Endothelial cell of umbilical vein (primary cell): ENCODE measurements at regions of chr18 and their contacts with region 1.

Region 1: DNA sequence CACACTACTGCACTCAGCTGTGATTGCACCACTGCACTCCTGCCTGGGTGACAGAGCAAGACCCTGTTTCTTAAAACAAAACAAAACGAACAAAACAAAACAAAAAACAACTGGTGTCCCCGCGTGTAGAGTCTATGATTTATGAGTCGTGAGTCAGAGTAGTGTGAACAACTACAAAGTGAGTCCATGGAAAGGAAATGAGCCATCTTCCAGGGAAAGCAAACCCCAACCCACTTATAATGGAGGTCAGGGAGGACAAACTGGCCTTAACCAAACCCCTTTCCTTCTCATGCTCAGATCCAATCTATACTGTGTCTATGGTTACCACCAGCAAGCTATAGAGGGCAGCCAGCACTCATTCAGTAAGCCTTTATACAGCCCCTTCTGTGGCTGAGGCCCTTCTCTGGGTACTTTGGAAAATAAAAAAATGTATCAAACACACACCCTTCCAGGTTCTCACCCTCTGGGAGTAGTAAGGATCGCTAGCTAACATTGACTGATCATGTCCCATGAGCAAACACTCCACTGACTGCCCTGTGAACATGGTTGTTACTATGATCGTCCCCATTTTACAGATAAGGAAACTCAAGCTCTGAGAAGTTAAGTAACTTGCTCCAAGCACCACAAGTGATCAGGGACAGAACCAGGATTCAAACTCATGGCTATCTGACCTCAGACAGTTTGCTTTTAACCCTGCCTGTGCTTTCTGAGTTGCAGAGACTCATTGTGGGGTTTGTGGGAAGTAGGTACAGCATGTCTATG is 24.7 kb upstream of the COLEC12 start:
- DNase-seq: peak; percentile 98
- H3K4me3 ChIP-seq: no peak overlapping the region
- H3K27ac ChIP-seq: peak overlapping the region; percentile 98
- H3K4me1 ChIP-seq: peaks cover 37% of the 10 kb centered on the region
- H3K27me3 ChIP-seq: no peaks in the 10 kb centered on the region
- CTCF ChIP-seq: no peak
- POLR2A ChIP-seq: peak; percentile 74

Region 2: DNA sequence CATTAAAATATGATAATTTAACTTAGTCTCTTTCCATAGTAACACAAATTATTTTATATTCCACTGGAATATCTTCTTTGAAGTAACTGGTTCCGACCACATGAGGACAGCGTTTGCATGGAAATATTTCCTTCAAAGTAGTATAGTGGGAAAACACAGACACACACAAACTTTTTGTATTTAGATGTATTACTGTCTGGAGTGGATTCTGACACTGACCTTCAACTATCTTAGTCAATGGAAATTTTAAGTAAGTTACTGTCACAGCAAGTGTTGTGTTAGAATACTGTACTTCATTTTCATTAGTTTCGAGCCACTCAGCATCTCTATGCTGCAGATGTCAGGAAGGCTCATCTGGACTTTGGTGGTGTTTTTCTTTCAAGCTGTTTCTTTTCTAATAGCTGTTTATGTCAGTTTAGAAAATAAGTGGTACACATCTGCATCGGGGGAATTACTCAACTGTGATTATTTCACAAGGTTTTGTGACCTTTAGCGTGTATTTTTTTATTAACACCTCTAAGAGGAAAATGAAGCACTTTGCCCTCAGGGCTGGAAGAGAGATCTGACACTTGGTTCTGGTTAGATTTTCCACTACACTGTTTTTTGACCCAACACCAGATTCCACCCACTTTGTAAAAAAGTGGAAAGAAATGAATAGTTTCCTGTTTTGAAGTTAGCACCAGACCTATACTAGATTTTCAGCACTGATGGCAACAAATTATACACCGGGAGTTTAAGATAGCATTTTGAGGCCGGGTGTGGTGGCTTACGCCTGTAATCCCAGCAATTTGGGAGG is 238.5 kb before region 1 on chr18:
- CTCF ChIA-PET with region 1: no interaction called
- POLR2A ChIA-PET with region 1: no interaction called
- dilution Hi-C with region 1: no loop called
- intact Hi-C with region 1: loop called (anchors 2 kb)
- DNase-seq: peak; percentile 67
- H3K4me3 ChIP-seq: no peak overlapping the region
- H3K27ac ChIP-seq: no peak overlapping the region
- H3K4me1 ChIP-seq: no peaks in the 10 kb centered on the region
- H3K27me3 ChIP-seq: peaks cover 0 to 3% of the 10 kb centered on the region in 2 experiments
- CTCF ChIP-seq: peak; percentile 38 to 39
- POLR2A ChIP-seq: no peak

Region 3: DNA sequence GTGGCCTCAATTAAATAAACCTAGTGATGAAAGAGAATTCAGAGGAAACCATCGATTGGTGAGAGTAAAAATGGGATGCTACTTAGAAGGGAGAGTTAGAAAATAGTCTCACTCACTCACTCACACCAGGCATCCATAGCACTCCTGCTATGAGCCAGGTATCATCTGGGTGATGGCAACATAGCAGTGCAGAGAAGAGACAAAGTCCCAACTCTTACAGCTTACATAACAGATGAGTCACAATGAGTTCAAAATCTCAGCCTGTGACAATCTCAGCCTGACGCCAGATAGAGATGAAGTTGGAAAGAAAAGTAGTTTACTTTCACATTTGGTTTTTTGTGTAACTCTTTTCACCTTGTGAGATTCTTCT is 202.0 kb before region 1 on chr18:
- CTCF ChIA-PET with region 1: no interaction called
- POLR2A ChIA-PET with region 1: no interaction called
- dilution Hi-C with region 1: no loop called
- intact Hi-C with region 1: loop called (anchors 2 kb)
- DNase-seq: peak; percentile 62
- H3K4me3 ChIP-seq: no peak overlapping the region
- H3K27ac ChIP-seq: peak overlapping the region; percentile 29
- H3K4me1 ChIP-seq: peaks cover 30% of the 10 kb centered on the region
- H3K27me3 ChIP-seq: no peaks in the 10 kb centered on the region
- CTCF ChIP-seq: no peak
- POLR2A ChIP-seq: no peak

Region 4: DNA sequence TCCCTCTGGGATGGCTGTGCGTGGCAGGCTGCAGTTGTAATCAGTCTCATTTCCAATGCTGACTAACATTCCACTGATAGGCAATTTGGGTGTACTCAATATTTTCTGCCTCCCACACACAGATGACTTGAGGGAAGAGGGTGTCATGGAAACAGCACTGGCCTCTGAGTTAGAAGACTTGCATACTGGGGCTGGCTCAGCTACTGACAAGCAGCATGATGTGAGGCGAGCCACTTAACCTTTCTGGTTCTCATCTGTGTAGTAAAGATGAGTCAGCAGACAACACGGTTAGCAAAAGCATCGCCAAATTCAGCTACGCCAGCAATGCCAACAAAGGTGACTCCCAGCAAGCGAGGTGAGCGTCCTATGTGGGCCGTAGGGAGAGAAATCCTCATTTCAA is 98.2 kb before region 1 on chr18:
- CTCF ChIA-PET with region 1: no interaction called
- POLR2A ChIA-PET with region 1: no interaction called
- dilution Hi-C with region 1: no loop called
- intact Hi-C with region 1: loop called (anchors 1 kb)
- DNase-seq: no peak
- H3K4me3 ChIP-seq: no peak overlapping the region
- H3K27ac ChIP-seq: no peak overlapping the region
- H3K4me1 ChIP-seq: peaks cover 23% of the 10 kb centered on the region
- H3K27me3 ChIP-seq: no peaks in the 10 kb centered on the region
- CTCF ChIP-seq: no peak
- POLR2A ChIP-seq: no peak

Region 5: GRCh38 chr18:477565-477964 is 47.7 kb before region 1 on chr18:
- CTCF ChIA-PET with region 1: no interaction called
- POLR2A ChIA-PET with region 1: no interaction called
- dilution Hi-C with region 1: no loop called
- intact Hi-C with region 1: loop called (anchors 1 kb)
- DNase-seq: no peak
- H3K4me3 ChIP-seq: no peak overlapping the region
- H3K27ac ChIP-seq: no peak overlapping the region
- H3K4me1 ChIP-seq: peaks cover 12% of the 10 kb centered on the region
- H3K27me3 ChIP-seq: no peaks in the 10 kb centered on the region
- CTCF ChIP-seq: peak; percentile 10 to 13
- POLR2A ChIP-seq: no peak

Region 6: DNA sequence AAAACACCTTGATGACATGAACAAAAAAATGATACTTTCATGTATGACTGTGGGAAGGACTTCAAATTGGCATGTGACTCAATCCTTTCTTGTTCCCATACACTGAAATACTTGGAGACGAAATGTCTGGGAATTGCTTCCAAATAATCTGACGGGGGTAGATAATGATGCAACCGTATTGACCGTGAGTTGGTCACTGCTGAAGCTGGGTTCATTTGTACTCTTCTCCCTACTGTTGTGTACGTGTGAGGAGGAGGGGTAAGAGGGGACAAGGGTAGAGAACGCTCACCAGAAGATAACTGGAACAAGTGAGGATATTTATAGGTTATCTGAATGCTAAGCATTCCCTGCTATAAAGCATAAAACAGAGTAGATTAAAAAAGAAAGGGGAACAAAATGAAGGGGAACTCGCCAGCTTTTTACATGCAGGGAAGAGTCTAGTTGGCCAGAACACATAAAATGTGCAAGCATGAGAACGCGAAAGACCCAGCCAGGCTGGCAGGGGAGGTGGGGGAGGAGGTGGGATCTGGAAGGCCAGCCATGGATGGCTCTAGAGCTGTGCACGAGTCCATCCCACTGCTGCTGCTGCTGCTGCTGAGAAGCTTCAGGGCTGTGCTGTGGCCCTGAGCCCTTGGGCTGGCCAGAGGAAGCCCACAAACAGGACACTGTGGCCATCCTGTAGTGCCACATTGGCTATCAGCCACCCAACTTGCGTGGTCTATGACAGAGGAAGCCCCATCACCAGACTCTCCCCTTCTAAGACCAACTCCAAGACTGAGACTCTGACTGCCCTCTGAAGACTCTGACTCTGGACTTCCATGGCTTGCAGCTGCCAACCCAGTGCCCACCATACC is 39.7 kb after region 1 on chr18:
- CTCF ChIA-PET with region 1: no interaction called
- POLR2A ChIA-PET with region 1: no interaction called
- dilution Hi-C with region 1: no loop called
- intact Hi-C with region 1: no loop called
- DNase-seq: no peak
- H3K4me3 ChIP-seq: no peak overlapping the region
- H3K27ac ChIP-seq: no peak overlapping the region
- H3K4me1 ChIP-seq: no peaks in the 10 kb centered on the region
- H3K27me3 ChIP-seq: peaks cover 10 to 16% of the 10 kb centered on the region in 2 experiments
- CTCF ChIP-seq: no peak
- POLR2A ChIP-seq: no peak

Region 7: DNA sequence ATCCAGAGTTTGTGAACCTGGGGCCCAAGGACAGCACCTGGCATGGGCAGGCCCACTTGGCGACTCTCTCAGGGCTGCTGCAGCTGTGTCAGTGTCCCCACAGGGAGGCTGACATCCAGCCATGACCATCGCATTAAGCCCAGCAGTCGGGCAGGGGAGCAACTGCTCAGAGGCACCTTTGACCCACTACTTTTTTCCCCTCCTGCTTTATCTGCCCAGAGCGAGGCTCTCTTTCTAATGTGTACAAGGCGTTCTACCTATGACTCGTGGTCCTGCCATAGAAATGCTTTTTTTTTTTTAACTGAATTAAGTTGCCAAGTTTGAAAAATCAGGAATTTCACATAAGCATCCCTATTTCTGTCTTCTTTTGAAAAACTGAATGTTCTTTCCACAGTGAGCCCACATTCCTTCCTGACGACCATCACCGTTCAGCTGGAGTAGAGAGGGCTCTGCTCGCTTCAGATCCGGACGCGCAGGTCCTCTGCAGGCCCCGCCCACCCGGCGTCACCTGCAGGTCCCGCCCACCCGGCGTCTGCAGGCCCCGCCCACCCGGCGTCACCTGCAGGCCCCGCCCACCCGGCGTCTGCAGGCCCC is 71.2 kb after region 1 on chr18:
- CTCF ChIA-PET with region 1: no interaction called
- POLR2A ChIA-PET with region 1: no interaction called
- dilution Hi-C with region 1: no loop called
- intact Hi-C with region 1: loop called (anchors 5 kb)
- DNase-seq: no peak
- H3K4me3 ChIP-seq: no peak overlapping the region
- H3K27ac ChIP-seq: no peak overlapping the region
- H3K4me1 ChIP-seq: no peaks in the 10 kb centered on the region
- H3K27me3 ChIP-seq: peaks cover 33 to 35% of the 10 kb centered on the region in 2 experiments
- CTCF ChIP-seq: no peak
- POLR2A ChIP-seq: no peak

Region 8: DNA sequence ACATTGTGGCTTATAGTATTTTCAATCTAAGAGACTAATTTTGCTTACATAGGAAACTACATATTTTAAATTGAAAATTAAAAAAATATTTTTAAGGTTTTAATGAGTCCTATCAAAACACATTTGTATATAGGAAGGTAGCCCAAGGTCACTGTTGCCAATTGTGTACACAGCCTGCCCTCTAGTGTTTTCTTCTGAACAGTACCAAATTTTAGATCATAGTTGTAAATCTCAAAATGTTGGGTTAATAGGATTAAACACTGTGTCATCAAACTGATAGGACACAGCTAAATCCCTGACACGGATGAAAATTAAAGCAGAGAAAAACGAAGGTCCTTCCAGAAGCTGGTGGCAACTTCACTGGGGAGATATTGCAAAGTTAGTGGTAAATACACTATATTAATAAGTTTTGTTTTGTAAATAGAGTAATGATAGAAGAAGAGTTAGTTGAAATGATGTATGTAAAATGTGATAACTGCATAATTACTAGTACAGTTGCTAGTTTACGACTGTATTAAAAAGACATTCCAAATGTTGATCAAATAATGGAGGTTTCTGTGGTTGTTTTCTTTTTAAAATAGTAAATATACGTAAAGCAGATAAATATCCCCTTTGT is 91.3 kb after region 1 on chr18:
- CTCF ChIA-PET with region 1: interaction called, 12 read pairs
- POLR2A ChIA-PET with region 1: no interaction called
- dilution Hi-C with region 1: no loop called
- intact Hi-C with region 1: loop called (anchors 5 kb)
- DNase-seq: peak; percentile 64
- H3K4me3 ChIP-seq: no peak overlapping the region
- H3K27ac ChIP-seq: no peak overlapping the region
- H3K4me1 ChIP-seq: no peaks in the 10 kb centered on the region
- H3K27me3 ChIP-seq: no peaks in the 10 kb centered on the region
- CTCF ChIP-seq: peak; percentile 47 to 50
- POLR2A ChIP-seq: no peak

Region 9: GRCh38 chr18:1026930-1027329 is 501.7 kb after region 1 on chr18:
- CTCF ChIA-PET with region 1: no interaction called
- POLR2A ChIA-PET with region 1: no interaction called
- dilution Hi-C with region 1: no loop called
- intact Hi-C with region 1: no loop called
- DNase-seq: no peak
- H3K4me3 ChIP-seq: no peak overlapping the region
- H3K27ac ChIP-seq: no peak overlapping the region
- H3K4me1 ChIP-seq: no peaks in the 10 kb centered on the region
- H3K27me3 ChIP-seq: no peaks in the 10 kb centered on the region
- CTCF ChIP-seq: no peak
- POLR2A ChIP-seq: no peak